ENCODE measurements at regions of chr9 and their contacts with region 1.

Region 1: DNA sequence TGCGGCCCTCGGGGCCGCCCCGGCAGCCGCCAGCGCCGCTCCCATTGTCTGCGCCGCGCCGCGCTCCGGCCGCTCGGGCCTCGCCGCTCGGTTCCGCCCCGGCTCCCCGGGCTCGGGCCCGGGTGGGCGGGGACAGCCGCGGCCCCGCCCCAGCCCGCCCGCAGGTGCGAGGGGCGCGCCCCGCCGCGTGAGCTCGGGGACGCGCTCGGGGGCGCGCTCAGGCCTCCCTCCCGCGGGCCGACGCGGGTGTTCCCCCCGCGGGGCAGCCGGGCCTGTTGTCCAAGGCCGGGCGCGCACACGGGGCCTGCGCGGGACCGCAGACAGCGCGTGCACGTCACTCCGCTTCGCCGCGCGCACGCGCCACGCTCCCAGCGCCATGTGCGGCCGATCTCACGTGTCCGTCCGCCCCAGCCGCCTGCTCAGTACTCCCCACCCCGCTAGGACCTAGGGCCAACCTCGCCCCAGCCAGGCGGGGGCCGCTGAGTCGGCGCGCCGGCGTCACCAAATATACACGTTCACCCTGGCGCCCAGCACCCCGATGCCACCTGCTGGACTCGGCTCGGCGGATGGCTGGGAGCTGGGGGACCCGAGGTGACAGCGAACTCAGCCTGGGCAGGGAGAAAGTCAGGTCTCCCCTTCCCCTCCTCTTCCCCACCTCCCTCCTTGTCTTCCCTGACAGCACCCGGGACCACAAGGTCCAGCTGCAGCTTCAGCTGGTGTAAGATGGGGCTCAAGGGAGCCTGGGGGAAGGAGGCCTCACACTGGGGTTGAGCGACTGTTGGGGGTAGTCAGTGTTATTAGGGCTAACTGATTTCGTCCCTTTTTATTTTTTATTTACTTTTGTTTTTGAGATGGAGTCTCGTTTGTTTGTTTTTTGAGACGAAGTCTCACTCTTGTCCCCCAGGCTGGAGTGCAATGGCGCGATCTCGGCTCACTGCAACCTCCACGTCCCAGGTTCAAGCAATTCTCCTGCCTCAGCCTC is 14.3 kb downstream of the GBGT1 start:
- DNase-seq: peak; percentile 90
- ATAC-seq: peak; percentile 73
- H3K4me3 Mint-ChIP-seq: peak overlapping the region; percentile 72
- H3K27ac Mint-ChIP-seq: peak overlapping the region; percentile 84
- H3K4me1 Mint-ChIP-seq: peaks cover 35% of the 10 kb centered on the region
- H3K27me3 Mint-ChIP-seq: no peaks in the 10 kb centered on the region
- CTCF ChIP-seq: peak; percentile 38

Region 2: GRCh38 chr9:133048569-133048968 is 100.8 kb before region 1 on chr9:
- CTCF ChIA-PET with region 1: interaction called, 11 read pairs
- POLR2A ChIA-PET with region 1: no interaction called
- intact Hi-C with region 1: no loop called
- DNase-seq: peak; percentile 54
- ATAC-seq: peak; percentile 84
- H3K4me3 Mint-ChIP-seq: no peak overlapping the region
- H3K27ac Mint-ChIP-seq: no peak overlapping the region
- H3K4me1 Mint-ChIP-seq: peaks cover 7% of the 10 kb centered on the region
- H3K27me3 Mint-ChIP-seq: no peaks in the 10 kb centered on the region
- CTCF ChIP-seq: peak; percentile 51

Region 3: DNA sequence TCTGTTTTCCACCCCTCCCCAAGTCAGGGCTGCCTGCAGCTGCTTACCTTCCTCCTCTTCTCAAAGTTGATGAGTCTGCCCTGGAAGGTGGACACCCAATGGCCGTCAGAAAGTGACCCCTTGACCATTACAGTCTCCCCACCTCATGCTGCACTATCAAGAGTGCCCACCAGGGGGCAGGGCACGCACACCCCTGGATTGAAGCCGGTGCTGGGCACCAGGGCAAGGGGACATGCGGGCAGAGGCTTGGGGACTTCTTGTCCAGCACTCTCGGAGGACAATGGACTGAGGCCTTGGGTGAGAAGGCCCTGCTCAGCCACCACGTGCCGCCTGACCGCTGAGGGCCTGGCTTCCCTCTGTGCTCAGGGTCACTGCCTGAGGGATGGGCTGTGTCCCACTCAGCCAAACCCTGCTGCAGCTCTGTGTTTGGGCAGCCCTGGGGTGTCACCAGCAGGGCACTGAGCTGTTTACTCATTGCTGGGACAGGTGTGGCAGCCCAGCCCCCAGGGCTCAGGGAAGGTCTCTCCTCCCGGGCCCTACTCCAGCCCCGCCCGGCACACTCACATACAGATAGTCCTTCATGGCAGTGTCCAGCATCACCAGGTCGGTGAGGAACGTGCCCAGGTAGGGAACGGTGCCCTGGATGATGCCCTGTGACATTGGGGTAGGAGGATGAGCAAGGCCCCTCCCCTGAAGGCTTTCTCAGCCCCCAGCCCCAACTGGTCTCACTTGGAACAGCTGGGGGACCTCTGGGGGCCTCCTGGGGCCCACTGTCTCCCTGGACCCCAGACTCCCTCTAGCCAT is 46.0 kb before region 1 on chr9:
- CTCF ChIA-PET with region 1: interaction called, 376 read pairs
- POLR2A ChIA-PET with region 1: interaction called, 9 read pairs
- intact Hi-C with region 1: loop called (anchors 2 kb)
- DNase-seq: peak; percentile 59
- ATAC-seq: peak; percentile 72
- H3K4me3 Mint-ChIP-seq: no peak overlapping the region
- H3K27ac Mint-ChIP-seq: no peak overlapping the region
- H3K4me1 Mint-ChIP-seq: no peaks in the 10 kb centered on the region
- H3K27me3 Mint-ChIP-seq: no peaks in the 10 kb centered on the region
- CTCF ChIP-seq: peak; percentile 97

Region 4: DNA sequence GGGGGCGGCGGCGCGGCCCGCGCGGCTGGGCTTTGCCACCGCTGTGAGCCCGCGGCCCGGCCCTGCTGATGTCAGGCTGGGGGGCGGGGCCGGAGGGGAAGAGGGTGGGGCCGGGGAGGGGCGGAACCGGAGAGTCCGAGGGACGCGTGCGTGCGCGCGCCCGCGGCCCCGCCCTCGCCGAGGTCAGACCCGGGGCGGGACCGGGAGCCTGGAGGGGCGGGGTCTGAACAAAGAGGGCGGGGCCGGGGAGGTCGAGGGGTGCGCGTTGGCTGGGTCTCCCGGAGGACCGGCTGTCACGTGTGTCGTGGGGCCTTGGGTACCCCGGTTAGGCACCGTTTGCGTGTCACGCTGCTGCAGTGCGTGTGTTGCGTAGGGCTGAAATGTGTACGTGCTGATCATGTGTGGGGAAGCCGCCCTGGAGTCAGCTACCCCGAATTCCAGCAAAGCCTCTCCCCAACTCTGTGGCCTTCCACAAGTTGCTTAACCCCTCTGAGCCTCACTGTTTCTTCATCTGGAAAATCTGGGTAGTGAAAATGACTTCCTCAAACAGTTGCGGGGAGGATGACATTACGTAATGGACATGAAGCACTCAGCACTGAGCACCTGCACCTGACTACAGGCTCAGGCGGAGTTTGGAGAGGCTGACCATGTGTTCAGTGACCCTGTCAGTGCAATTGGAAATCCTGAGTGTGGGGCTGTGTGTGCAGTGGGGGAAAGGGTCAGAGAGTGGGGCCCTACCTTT is 28.0 kb before region 1 on chr9 and contains the start of gene RALGDS:
- CTCF ChIA-PET with region 1: interaction called, 376 read pairs
- POLR2A ChIA-PET with region 1: interaction called, 11 read pairs
- intact Hi-C with region 1: no loop called
- DNase-seq: peak; percentile 91
- ATAC-seq: peak; percentile 86
- H3K4me3 Mint-ChIP-seq: peak within 1 kb of the TSS; percentile 71
- H3K27ac Mint-ChIP-seq: peak within 1 kb of the TSS; percentile 79
- H3K4me1 Mint-ChIP-seq: peaks cover 67% of the 10 kb centered on the region
- H3K27me3 Mint-ChIP-seq: no peaks in the 10 kb centered on the region
- CTCF ChIP-seq: no peak
- total RNA-seq, gene RALGDS: 80.5 to 88.2 TPM

Region 5: GRCh38 chr9:133133681-133134418 is 15.6 kb before region 1 on chr9:
- CTCF ChIA-PET with region 1: interaction called, 177 read pairs
- POLR2A ChIA-PET with region 1: interaction called, 78 read pairs
- intact Hi-C with region 1: no loop called
- DNase-seq: peak; percentile 94
- ATAC-seq: peak; percentile 81
- H3K4me3 Mint-ChIP-seq: peak overlapping the region; percentile 47
- H3K27ac Mint-ChIP-seq: peak overlapping the region; percentile 93
- H3K4me1 Mint-ChIP-seq: peaks cover 72% of the 10 kb centered on the region
- H3K27me3 Mint-ChIP-seq: no peaks in the 10 kb centered on the region
- CTCF ChIP-seq: no peak

Region 6: GRCh38 chr9:133166392-133166791 is 17.0 kb after region 1 on chr9:
- CTCF ChIA-PET with region 1: no interaction called
- POLR2A ChIA-PET with region 1: no interaction called
- intact Hi-C with region 1: no loop called
- DNase-seq: no peak
- ATAC-seq: no peak
- H3K4me3 Mint-ChIP-seq: no peak overlapping the region
- H3K27ac Mint-ChIP-seq: no peak overlapping the region
- H3K4me1 Mint-ChIP-seq: no peaks in the 10 kb centered on the region
- H3K27me3 Mint-ChIP-seq: peaks cover 1% of the 10 kb centered on the region
- CTCF ChIP-seq: no peak

Region 7: GRCh38 chr9:133221177-133221809 is 71.9 kb after region 1 on chr9:
- CTCF ChIA-PET with region 1: no interaction called
- POLR2A ChIA-PET with region 1: no interaction called
- intact Hi-C with region 1: no loop called
- DNase-seq: no peak
- ATAC-seq: no peak
- H3K4me3 Mint-ChIP-seq: no peak overlapping the region
- H3K27ac Mint-ChIP-seq: no peak overlapping the region
- H3K4me1 Mint-ChIP-seq: no peaks in the 10 kb centered on the region
- H3K27me3 Mint-ChIP-seq: peaks cover 29% of the 10 kb centered on the region
- CTCF ChIP-seq: no peak